ENCODE measurements at regions of chr12 and their contacts with region 1.

Region 1: DNA sequence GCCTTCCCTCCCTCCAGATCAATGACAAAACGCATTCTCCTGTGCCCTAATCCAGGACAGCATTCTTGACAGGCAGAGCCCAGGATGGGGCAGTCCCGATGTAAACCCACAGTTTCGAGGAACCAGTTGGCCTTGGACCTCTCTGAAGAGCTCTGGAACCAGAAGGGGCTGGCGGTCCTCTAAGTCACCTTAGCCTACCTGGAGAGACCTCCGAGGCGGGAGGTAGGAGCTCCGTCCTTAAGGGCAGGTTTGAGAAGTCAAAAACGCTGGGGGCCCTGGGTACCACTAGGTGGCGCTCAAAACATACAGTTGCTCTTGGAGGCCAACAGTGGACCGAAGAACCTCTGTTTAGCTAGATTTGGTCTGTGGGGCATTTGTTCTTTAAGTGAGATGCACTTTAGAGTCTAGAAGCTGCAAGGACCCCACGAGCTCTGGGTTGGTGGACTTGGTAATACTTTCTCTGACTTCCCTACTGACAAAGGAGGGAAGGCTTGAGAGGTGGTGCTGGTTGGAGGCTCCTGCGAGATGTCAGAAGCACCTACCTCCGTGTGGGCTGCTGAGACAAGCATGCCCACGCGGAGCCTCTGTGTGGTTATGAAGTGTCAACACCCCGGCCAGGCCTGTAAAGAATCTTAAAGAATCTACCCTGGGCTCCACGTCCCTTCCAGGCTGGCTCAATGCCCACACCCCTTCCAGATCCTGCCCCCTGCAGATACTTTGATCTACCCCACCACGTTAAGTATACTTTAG is 74.8 kb upstream of the CHST11 start:
- DNase-seq: peak; percentile 44
- ATAC-seq: peak; percentile 98
- H3K4me3 ChIP-seq: no peak overlapping the region
- H3K27ac ChIP-seq: no peak overlapping the region
- H3K4me1 ChIP-seq: no peaks in the 10 kb centered on the region
- H3K27me3 ChIP-seq: no peaks in the 10 kb centered on the region
- CTCF ChIP-seq: peak; percentile 91 to 92 (median 91); a peak in 5 of 6 replicates
- EP300 ChIP-seq: no peak
- POLR2A ChIP-seq: no peak
- RAD21 ChIP-seq: peak; percentile 100

Region 2: DNA sequence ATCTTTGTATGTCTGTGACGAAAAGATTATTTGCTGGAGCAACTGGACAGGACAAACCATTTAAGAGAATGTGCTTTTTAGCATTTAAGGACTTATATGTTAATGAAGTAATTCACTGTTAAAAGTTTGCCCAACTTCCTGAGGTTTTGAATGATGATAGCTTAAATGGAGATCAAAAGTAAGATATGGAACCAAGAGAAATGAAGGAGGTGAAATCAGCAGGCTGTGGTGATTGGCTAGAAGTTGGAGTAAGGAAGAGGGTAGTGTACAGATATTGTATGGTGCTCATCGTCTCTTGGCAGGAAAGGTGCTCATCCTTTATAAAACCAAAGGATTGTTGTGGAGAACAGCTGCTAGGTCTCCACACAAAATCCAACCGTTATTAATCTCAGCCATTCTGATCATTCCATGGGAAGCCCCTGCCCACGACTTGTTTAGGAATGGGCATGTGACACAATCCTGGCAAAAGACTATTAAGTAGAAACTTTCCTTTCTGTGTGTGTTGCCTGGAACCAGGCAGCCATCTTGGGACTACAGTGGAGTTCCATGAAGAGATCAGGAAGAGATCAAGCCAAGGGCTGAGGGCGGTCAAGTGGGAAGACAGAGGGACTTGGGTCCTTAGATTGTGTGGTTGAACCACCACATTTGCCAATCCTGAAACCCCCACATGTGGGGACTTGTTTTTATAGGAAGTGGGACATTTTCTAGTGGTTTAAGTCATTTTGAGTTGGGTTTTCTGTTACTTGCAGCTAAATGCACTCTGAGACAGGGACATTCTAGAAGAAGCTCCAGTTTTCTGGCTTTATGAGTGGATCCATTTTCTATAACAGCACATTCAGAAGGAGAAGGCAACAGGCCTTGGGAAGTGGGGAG is 18.1 kb after region 1 on chr12:
- CTCF ChIA-PET with region 1: interaction called, 10 read pairs
- POLR2A ChIA-PET with region 1: no interaction called
- RAD21 ChIA-PET with region 1: interaction called, 3 read pairs
- SMC1A ChIA-PET with region 1: no interaction called
- in situ Hi-C with region 1: no loop called
- intact Hi-C with region 1: no loop called
- DNase-seq: no peak
- ATAC-seq: no peak
- H3K4me3 ChIP-seq: no peak overlapping the region
- H3K27ac ChIP-seq: no peak overlapping the region
- H3K4me1 ChIP-seq: no peaks in the 10 kb centered on the region; the same call in 1 of the 2 replicates
- H3K27me3 ChIP-seq: no peaks in the 10 kb centered on the region
- CTCF ChIP-seq: no peak
- EP300 ChIP-seq: no peak
- POLR2A ChIP-seq: no peak
- RAD21 ChIP-seq: no peak

Region 3: DNA sequence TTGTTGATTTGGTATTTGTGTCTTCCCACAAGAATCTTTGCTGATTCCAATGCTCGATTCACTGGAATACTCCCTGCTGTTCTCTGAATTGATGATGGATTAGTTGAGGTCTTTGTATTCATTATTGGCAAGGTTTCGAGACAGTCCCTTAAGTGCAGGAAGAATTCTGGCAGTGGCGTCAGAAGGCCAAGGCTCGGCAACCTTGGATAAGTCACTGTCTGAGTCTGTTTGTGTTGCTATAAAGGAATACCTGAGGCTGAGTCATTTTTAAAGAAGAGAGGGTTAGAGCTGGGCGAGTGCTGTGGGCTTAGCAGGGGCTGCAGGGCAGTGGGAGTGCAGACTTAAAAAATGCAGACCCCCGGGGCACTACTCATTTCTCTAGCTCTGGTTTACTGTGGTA is 131.8 kb after region 1 on chr12:
- CTCF ChIA-PET with region 1: interaction called, 7 read pairs
- POLR2A ChIA-PET with region 1: no interaction called
- RAD21 ChIA-PET with region 1: interaction called, 13 read pairs
- SMC1A ChIA-PET with region 1: interaction called, 10 read pairs
- in situ Hi-C with region 1: no loop called
- intact Hi-C with region 1: no loop called
- DNase-seq: no peak
- ATAC-seq: no peak
- H3K4me3 ChIP-seq: no peak overlapping the region
- H3K27ac ChIP-seq: no peak overlapping the region
- H3K4me1 ChIP-seq: peaks cover 9% of the 10 kb centered on the region
- H3K27me3 ChIP-seq: no peaks in the 10 kb centered on the region
- CTCF ChIP-seq: no peak
- EP300 ChIP-seq: no peak
- POLR2A ChIP-seq: no peak
- RAD21 ChIP-seq: no peak

Region 4: DNA sequence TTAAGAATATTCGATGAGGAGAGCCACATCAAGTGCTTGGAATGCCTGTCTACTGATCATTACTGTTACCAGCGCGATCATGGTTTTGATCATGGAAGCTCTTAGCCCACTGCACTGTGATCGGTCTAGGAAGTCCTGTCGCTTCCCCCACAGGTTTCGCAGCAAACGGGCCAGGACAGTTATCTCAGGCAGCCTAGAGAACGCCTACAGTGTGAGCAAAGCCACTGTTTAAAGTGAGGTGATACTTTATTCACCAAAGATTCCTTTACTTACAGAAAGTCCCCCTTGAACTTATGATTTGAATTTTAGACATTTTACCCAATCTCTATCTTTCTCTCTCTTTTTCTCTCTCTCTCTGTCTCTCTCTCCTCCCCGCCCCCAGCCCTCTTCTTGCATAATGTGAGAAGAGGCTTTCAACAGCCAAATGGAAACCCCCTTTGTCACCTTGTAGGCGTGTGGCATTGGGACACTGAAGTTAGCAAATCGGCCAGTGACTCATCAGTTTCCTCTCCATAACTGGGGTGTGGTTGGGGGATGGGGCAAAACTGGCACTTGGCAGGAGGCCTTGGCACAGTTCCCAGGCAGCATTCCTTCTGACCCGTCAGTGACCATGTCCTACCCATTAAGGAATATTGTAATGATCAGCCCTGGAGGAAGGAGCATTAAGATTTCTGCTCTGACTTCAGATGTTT is 289.6 kb after region 1 on chr12:
- CTCF ChIA-PET with region 1: interaction called, 23 read pairs
- POLR2A ChIA-PET with region 1: no interaction called
- RAD21 ChIA-PET with region 1: interaction called, 14 read pairs
- SMC1A ChIA-PET with region 1: interaction called, 14 read pairs
- in situ Hi-C with region 1: no loop called
- intact Hi-C with region 1: no loop called
- DNase-seq: peak; percentile 88
- ATAC-seq: peak; percentile 86
- H3K4me3 ChIP-seq: peak overlapping the region; percentile 49
- H3K27ac ChIP-seq: peak overlapping the region; percentile 99
- H3K4me1 ChIP-seq: peaks cover 55% of the 10 kb centered on the region
- H3K27me3 ChIP-seq: no peaks in the 10 kb centered on the region
- CTCF ChIP-seq: no peak
- EP300 ChIP-seq: peak; percentile 84 to 95; a peak in 3 of 4 replicates
- POLR2A ChIP-seq: peak; percentile 73
- RAD21 ChIP-seq: peak; percentile 48

Region 5: GRCh38 chr12:104750061-104750460 is 368.2 kb after region 1 on chr12:
- CTCF ChIA-PET with region 1: interaction called, 4 read pairs
- POLR2A ChIA-PET with region 1: no interaction called
- RAD21 ChIA-PET with region 1: interaction called, 10 read pairs
- SMC1A ChIA-PET with region 1: interaction called, 4 read pairs
- in situ Hi-C with region 1: no loop called
- intact Hi-C with region 1: no loop called
- DNase-seq: no peak
- ATAC-seq: peak; percentile 58
- H3K4me3 ChIP-seq: no peak overlapping the region
- H3K27ac ChIP-seq: no peak overlapping the region
- H3K4me1 ChIP-seq: peaks cover 30% of the 10 kb centered on the region
- H3K27me3 ChIP-seq: no peaks in the 10 kb centered on the region
- CTCF ChIP-seq: no peak
- EP300 ChIP-seq: peak in 1 of 2 experiments; percentile 36; a peak in 1 of 4 replicates
- POLR2A ChIP-seq: no peak
- RAD21 ChIP-seq: no peak

Region 6: DNA sequence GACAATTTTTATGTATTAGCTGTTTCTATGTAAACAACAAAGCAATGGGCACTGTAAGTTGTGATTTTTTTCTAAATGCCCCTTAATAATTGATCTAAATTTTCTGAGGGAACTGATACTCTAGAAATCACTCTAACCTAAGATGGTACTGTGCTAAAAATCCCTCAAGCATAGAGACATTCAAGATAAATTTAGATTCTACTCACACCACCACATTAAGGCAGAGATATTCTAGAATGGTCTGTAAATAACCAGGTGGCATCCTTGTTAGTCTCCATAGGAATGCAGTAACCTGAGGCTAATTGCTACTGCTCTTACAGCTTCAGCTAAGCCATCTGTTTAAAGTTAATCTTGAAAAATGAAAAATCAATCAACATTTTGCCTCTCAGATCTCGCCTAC is 488.9 kb after region 1 on chr12:
- CTCF ChIA-PET with region 1: interaction called, 19 read pairs
- POLR2A ChIA-PET with region 1: no interaction called
- RAD21 ChIA-PET with region 1: interaction called, 12 read pairs
- SMC1A ChIA-PET with region 1: interaction called, 17 read pairs
- in situ Hi-C with region 1: loop called (anchors 5 kb)
- intact Hi-C with region 1: no loop called
- DNase-seq: peak; percentile 50
- ATAC-seq: peak; percentile 96
- H3K4me3 ChIP-seq: no peak overlapping the region
- H3K27ac ChIP-seq: no peak overlapping the region
- H3K4me1 ChIP-seq: peaks cover 15% of the 10 kb centered on the region
- H3K27me3 ChIP-seq: no peaks in the 10 kb centered on the region
- CTCF ChIP-seq: no peak
- EP300 ChIP-seq: peak in 1 of 2 experiments; percentile 34; a peak in 1 of 4 replicates
- POLR2A ChIP-seq: no peak
- RAD21 ChIP-seq: no peak

Measured in GM12878 (cell line).